ENCODE measurements at regions of chr1 and their contacts with region 1.

Region 1: DNA sequence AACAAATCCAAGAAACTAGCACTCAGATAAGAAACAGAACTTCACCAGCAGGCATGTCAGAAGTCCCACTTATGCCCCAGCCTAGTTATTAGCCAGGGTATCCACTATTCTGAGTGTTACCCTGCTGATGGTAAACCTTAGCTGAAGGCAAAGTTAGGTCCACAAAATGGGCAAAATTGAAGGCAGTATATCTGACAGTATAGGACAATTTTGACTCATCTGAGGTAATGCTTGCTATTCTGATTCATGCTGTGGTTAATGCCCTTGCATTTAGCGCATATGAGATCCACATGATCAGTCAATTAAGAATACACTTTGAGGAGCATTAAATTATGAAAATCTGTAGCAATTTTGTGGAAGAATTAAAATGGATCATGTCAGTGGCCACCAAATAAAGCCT is 15.1 kb downstream of the IFI44 start:
- DNase-seq: no peak
- H3K4me3 ChIP-seq: no peak overlapping the region
- H3K27ac ChIP-seq: no peak overlapping the region
- H3K4me1 ChIP-seq: no peaks in the 10 kb centered on the region
- H3K27me3 ChIP-seq: no peaks in the 10 kb centered on the region
- CTCF ChIP-seq: no peak
- POLR2A ChIP-seq: no peak

Region 2: DNA sequence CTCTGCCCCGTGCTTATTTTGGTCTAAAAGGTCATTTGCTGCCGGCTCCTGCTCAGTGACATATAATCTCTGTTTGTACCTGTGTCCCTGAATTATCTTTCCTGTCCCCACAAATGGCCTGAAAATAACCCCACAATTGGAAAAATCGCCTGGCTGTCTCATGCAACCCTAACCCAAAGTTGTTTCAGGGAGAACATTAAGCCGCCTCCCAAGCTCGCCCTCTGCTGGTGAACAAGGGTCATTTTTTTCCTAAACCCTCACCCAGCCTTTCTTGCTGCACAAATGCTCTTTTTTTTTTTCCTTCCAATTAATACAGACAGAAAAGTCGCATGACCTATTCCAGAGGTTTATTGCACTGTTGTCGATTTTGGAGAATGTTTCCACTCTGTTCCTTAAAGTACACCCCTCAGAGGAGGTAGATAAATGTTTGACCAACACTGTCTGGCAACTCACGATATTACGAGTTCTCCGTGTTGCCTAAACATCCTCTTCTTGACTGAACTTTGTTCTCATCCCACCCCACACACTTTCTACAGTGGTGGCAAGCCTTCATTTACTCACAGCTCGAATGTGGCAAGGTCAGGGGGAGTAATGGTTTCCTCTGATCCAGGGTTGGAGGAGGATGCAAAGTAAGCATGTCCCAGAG is 1131.0 kb before region 1 on chr1:
- intact Hi-C with region 1: no loop called
- DNase-seq: no peak
- H3K4me3 ChIP-seq: no peak overlapping the region
- H3K27ac ChIP-seq: no peak overlapping the region
- H3K4me1 ChIP-seq: no peaks in the 10 kb centered on the region
- H3K27me3 ChIP-seq: no peaks in the 10 kb centered on the region
- CTCF ChIP-seq: peak; percentile 55 to 82 (median 65)
- POLR2A ChIP-seq: no peak

Region 3: GRCh38 chr1:78627321-78627720 is 37.4 kb before region 1 on chr1:
- intact Hi-C with region 1: loop called (anchors 1 kb)
- DNase-seq: no peak
- H3K4me3 ChIP-seq: no peak overlapping the region
- H3K27ac ChIP-seq: no peak overlapping the region
- H3K4me1 ChIP-seq: no peaks in the 10 kb centered on the region
- H3K27me3 ChIP-seq: no peaks in the 10 kb centered on the region
- CTCF ChIP-seq: no peak
- POLR2A ChIP-seq: no peak

Region 4: DNA sequence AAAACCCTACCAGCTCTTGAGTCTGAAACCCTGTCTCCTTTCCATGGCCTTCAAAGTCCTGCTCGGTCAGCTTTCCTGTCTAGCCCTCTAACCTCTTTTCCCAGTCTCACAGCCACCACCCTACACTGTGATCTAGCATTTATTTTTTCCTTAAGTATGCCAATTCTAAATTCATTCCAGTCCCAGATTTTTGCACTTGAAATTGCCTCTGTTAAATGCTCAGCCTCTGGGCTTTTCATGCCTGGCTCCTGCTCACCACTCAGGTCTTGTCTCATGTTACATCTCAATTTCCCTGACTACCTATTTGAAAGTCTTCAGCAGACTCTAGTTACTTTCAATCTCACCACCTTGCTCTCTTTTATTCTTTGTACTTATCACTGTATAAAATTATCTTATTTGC is 165.6 kb after region 1 on chr1:
- intact Hi-C with region 1: no loop called
- DNase-seq: no peak
- H3K4me3 ChIP-seq: no peak overlapping the region
- H3K27ac ChIP-seq: no peak overlapping the region
- H3K4me1 ChIP-seq: no peaks in the 10 kb centered on the region
- H3K27me3 ChIP-seq: no peaks in the 10 kb centered on the region
- CTCF ChIP-seq: no peak
- POLR2A ChIP-seq: no peak

Region 5: DNA sequence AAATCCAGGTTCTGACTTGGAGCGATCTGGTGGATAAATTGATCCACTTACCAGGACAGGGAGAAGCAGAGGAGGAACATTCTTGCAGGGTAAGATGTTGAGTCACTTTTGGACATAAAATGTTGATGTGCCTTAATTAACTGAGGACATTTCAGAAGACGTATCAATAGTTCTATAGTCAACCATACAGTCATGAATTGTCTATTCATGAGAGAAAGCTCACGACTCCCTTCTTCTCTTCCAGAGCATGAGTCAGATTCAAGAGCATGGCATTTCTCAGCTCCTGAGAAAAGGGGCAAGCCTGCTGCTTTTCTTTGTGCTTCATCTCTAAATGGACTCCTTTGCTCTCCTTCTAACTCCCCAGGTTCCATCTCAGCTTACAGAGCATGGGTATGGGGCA is 286.0 kb after region 1 on chr1:
- intact Hi-C with region 1: no loop called
- DNase-seq: no peak
- H3K4me3 ChIP-seq: no peak overlapping the region
- H3K27ac ChIP-seq: no peak overlapping the region
- H3K4me1 ChIP-seq: no peaks in the 10 kb centered on the region
- H3K27me3 ChIP-seq: no peaks in the 10 kb centered on the region
- CTCF ChIP-seq: no peak
- POLR2A ChIP-seq: no peak

Region 6: GRCh38 chr1:79657951-79658658 is 993.3 kb after region 1 on chr1:
- intact Hi-C with region 1: no loop called
- DNase-seq: no peak
- H3K4me3 ChIP-seq: no peak overlapping the region
- H3K27ac ChIP-seq: no peak overlapping the region
- H3K4me1 ChIP-seq: no peaks in the 10 kb centered on the region
- H3K27me3 ChIP-seq: no peaks in the 10 kb centered on the region
- CTCF ChIP-seq: no peak
- POLR2A ChIP-seq: no peak